HEK293T (cell line): ENCODE measurements at regions of chr14 and their contacts with region 1.

Region 1: DNA sequence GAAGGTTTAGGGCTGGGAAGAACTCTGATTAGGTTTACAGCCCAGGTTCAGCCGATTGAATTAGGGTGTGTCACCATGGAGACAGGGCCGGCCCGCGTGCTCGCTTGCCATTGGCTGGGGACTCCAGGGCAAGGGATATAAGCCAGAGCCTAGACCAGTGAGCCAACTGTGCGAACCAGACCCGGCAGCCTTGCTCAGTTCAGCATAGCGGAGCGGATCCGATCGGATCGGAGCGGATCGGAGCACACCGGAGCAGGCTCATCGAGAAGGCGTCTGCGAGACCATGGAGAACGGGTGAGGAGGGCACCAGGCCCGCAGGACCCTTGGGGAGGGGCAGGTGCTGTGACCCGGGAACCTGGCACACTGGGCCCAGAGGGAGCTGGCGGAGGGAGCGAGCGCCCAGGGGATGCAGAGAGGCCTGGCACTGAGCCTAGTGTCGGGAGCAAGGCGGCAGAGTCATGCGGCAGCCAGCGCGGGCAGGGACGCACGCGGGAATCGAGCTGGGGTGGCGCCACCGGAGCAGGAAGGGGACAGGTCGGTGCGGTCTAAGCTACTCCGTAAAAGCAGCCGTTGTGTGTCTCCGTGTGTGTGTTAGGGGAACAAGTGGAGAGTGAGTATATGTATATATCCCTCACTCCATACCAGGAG is at the start of gene PNP:
- DNase-seq: peak; percentile 93

Region 2: GRCh38 chr14:20332788-20333493 is 136.4 kb before region 1 on chr14 and contains the start of gene CCNB1IP1:
- CTCF ChIA-PET with region 1: no interaction called
- POLR2A ChIA-PET with region 1: interaction called, 10 read pairs
- DNase-seq: peak; percentile 79

Region 3: DNA sequence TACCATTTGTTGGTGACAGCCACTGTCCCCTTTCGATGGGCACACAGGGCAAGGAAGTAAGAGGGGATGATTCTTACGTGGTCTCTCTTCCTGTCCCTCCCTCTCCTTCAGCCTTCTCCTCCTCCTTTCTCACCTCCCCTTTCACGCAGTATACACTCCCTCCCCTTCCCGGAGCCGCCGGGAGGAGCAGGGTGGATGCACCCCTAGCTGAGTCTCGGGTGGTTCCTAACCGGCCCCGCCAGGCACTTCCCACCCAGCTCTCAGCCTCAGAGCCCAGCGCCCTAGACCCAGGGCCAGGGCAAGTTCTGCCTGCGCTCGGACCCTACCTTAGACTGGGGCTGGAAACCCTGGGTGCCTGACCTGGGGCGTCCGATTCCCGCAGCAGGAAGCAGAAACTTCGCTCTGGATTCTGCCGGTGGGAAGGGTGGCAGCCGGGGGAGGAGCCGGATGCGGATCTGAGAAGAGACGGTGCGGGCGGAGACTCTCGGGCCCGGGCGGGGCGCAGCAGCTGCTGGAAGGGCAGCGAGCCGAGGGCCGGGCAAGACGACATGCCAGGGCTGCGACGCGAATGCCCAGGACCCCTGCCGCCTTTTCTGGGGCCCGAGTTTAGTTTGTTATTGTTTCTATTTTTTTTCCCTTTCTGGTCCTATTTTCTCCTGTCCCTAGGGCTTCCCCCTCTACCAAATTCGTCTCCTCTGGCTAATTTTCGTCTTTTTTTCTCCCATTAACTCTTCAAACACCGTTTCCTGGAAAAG is 56.1 kb before region 1 on chr14 and contains the start of gene TEP1:
- CTCF ChIA-PET with region 1: interaction called, 4 read pairs
- POLR2A ChIA-PET with region 1: interaction called, 16 read pairs
- DNase-seq: peak; percentile 79

Region 4: DNA sequence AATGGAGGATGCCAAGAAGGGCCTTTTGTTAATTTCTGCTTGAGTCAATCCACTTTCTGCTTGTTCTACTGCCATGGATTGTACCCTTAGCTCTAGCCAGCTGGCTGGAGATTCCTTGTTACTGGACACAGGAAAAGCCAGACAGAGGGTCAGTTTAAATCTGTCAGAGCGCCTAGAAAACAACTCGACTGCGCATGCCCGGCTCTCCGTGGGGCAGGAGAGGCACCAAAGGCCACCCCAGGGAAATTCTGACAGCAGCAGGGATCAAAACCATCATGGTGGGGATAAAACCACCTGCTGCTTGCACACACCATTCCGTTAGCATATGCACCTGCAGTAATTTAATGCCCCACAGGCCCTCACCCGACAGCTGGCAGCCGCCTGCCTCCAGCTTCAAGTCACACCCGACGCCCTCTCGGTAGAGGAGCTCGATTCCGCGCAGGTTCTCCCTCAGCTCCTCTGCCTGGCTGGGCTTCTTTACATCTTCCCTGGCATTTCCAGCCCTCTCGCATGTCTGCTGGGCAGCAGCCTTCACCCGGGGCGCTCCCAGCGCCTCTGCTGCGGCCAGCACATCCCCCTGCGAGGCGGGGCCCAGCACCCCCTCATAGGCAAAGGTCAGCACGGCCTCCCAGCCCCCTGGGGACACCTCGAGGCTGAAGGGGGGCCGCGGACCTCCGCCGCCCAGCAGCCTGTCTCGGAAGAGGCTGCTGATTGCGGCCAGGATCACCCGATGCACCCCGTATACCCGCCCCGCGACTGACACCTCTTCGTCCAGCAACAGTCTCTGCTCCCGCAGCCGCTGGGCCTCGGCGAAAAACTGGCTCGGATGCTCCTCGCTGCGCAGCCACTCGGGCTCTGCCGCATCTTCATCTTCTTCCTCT is 34.4 kb before region 1 on chr14:
- CTCF ChIA-PET with region 1: no interaction called
- POLR2A ChIA-PET with region 1: no interaction called
- DNase-seq: no peak

Region 5: GRCh38 chr14:20446889-20447288 is 22.5 kb before region 1 on chr14:
- CTCF ChIA-PET with region 1: no interaction called
- POLR2A ChIA-PET with region 1: no interaction called
- DNase-seq: no peak